ENCODE measurements at regions of chr16 and their contacts with region 1.

Region 1: DNA sequence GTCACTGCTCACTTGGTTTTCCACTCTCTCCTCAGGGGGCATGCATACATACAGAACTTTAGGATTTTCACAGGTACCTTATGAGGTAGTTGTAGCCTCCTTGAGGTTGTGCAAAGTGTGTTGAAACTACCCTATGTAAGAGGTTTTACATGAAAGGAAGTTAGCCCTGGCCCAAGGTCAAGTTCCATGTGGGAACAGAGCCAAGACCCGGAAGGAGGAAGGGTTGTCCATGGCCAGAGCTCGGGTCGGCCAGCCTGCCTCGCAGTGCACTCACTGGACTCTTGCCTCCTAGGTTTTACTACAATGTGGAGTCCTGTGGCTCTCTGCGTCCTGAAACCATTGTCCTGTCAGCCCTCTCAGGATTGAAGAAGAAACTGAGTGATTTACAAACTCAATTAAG is 8.2 kb downstream of the POLR2C start:
- DNase-seq: peak; percentile 45
- H3K4me3 ChIP-seq: no peak overlapping the region
- H3K27ac ChIP-seq: peak overlapping the region in 1 of 2 experiments; percentile 95; a peak in 2 of 4 replicates
- H3K4me1 ChIP-seq: peaks cover 0 to 60% of the 10 kb centered on the region in 2 experiments; a peak in 2 of 4 replicates
- H3K27me3 ChIP-seq: no peaks in the 10 kb centered on the region
- CTCF ChIP-seq: no peak
- EP300 ChIP-seq: no peak
- RAD21 ChIP-seq: no peak

Region 2: DNA sequence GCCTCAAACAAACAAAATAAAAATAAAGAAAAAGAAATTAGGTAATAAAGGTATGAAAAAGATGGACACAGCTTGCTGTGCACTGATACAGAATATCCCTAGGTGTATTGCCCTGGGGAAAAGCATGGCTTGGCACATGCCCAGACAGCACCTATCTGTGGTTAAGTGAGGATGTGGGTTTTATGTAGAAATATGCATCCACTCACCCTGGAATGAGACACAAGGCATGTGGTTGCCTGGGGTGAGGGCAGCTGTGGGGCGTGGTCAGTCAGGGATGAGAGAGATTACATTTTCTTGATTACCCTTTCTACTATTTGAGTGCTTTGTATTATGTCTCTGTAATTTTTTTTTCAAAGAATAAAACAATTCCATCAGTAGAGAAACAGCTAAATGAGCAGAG is 193.1 kb before region 1 on chr16:
- CTCF ChIA-PET with region 1: no interaction called
- POLR2A ChIA-PET with region 1: no interaction called
- DNase-seq: no peak
- H3K4me3 ChIP-seq: no peak overlapping the region
- H3K27ac ChIP-seq: no peak overlapping the region
- H3K4me1 ChIP-seq: peaks cover 4 to 6% of the 10 kb centered on the region in 2 experiments; a peak in 2 of 4 replicates
- H3K27me3 ChIP-seq: no peaks in the 10 kb centered on the region
- CTCF ChIP-seq: no peak
- EP300 ChIP-seq: no peak
- RAD21 ChIP-seq: no peak

Region 3: DNA sequence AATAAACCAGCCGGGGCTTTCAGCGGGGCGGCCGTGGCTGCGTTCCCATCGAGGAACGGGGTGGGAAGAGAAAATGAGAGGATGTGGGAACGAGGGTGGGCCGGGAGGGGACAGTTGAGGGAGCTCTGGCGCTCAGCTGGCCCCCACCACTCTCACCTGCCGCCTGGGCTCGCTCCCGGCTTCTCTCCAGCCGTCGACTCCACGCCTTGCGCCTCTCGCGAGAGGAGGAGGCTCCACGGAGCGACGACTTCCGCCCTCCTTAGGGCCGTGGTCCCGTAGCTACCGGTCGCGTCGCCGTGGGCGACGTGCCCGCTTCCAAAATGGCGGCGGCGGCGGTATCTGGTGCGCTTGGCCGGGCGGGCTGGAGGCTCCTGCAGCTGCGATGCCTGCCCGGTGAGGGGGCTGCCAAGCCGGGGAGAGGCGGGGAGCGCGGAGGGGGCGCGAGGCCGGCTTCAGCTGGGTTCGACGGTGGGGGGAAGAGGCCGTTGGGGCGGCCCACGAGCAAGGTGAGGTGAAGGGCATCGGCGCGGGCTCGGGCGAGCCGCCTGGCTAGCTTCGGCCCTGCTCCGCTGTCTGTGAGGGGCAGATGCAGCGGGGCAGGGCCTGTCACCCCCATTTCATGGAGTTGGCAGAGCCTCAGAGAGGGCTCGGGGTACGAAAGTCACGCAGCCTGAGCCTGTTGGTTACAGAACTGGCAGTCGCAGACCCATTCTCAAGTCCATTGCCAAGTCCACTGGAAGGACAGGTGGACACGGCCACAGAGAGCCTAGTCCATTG is 23.3 kb before region 1 on chr16 and contains the starts of genes CIAPIN1 and COQ9:
- CTCF ChIA-PET with region 1: interaction called, 4 read pairs
- POLR2A ChIA-PET with region 1: interaction called, 10 read pairs
- DNase-seq: peak; percentile 96
- H3K4me3 ChIP-seq: peak within 1 kb of the TSS; percentile 90 to 96
- H3K27ac ChIP-seq: peak within 1 kb of the TSS; percentile 65 to 84; a peak in 3 of 4 replicates
- H3K4me1 ChIP-seq: peaks cover 3 to 9% of the 10 kb centered on the region in 2 experiments; a peak in 2 of 4 replicates
- H3K27me3 ChIP-seq: no peaks in the 10 kb centered on the region
- CTCF ChIP-seq: no peak
- EP300 ChIP-seq: no peak
- RAD21 ChIP-seq: no peak
- polyA plus RNA-seq, gene CIAPIN1: 43.6 and 63.3 TPM in 2 replicates
- polyA plus RNA-seq, gene COQ9: 81.2 and 104 TPM in 2 replicates

Region 4: GRCh38 chr16:57507136-57508034 is 36.7 kb after region 1 on chr16:
- CTCF ChIA-PET with region 1: interaction called, 354 read pairs
- POLR2A ChIA-PET with region 1: interaction called, 52 read pairs
- DNase-seq: peak; percentile 82
- H3K4me3 ChIP-seq: no peak overlapping the region
- H3K27ac ChIP-seq: peak overlapping the region in 1 of 2 experiments; percentile 99; a peak in 3 of 4 replicates
- H3K4me1 ChIP-seq: peaks cover 0 to 56% of the 10 kb centered on the region in 2 experiments; a peak in 1 of 4 replicates
- H3K27me3 ChIP-seq: no peaks in the 10 kb centered on the region
- CTCF ChIP-seq: no peak
- EP300 ChIP-seq: 0 out of 4 replicates have a peak, but pooled peaks of 1 of the 2 experiments have one; percentile 24
- RAD21 ChIP-seq: no peak

Region 5: DNA sequence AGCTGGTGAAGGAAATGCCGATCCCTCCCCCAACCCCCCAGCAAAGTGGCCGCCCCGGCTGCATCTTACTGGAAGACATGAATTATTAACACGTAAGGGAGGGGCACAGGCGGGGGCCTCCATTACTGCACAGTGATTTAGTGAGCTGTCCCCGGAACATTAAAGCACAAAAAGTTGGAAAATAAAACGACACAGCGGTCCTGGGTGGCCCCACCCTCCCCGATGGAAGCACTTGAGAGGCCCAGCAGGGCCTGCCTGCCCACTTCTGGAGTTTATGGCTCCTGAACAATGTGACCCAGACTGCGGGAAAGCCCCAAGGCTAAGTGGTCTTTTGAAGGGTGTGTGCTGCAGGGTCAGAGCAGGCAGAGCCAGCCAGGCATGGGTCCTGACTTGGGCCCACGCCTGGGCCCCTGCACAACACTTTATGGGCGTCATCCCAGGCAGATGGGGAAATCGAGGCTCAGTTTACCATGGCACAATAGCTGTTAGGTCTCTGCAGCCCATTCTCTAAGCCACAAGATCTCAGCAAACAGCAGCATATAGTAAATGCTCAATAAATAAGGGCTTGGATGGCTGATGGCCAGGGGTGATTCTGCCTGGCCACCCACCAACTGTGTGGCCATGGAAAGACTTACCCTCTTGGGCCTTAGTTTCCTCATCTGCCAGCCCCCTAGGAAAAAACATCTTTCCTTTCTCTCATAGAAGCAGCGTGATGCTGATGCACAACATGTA is 42.9 kb after region 1 on chr16:
- CTCF ChIA-PET with region 1: interaction called, 354 read pairs
- POLR2A ChIA-PET with region 1: interaction called, 52 read pairs
- DNase-seq: peak; percentile 19
- H3K4me3 ChIP-seq: no peak overlapping the region
- H3K27ac ChIP-seq: peak overlapping the region in 1 of 2 experiments; percentile 4; a peak in 1 of 4 replicates
- H3K4me1 ChIP-seq: peaks cover 0 to 47% of the 10 kb centered on the region in 2 experiments; a peak in 1 of 4 replicates
- H3K27me3 ChIP-seq: no peaks in the 10 kb centered on the region
- CTCF ChIP-seq: no peak
- EP300 ChIP-seq: no peak
- RAD21 ChIP-seq: no peak

Measured in SK-N-SH (cell line).